MCF 10A (cell line): ENCODE measurements at regions of chr3 and their contacts with region 1.

Region 1: GRCh38 chr3:132682201-132682600 is 22.1 kb downstream of the UBA5 start:
- DNase-seq: no peak
- H3K4me3 Mint-ChIP-seq: no peak overlapping the region
- H3K27ac Mint-ChIP-seq: no peak overlapping the region
- H3K4me1 Mint-ChIP-seq: no peaks in the 10 kb centered on the region
- H3K27me3 Mint-ChIP-seq: no peaks in the 10 kb centered on the region
- CTCF ChIP-seq: no peak

Region 2: GRCh38 chr3:132650153-132650552 is 32.0 kb before region 1 on chr3:
- CTCF ChIA-PET with region 1: no interaction called
- POLR2A ChIA-PET with region 1: no interaction called
- intact Hi-C with region 1: no loop called
- DNase-seq: no peak
- H3K4me3 Mint-ChIP-seq: no peak overlapping the region
- H3K27ac Mint-ChIP-seq: no peak overlapping the region
- H3K4me1 Mint-ChIP-seq: peaks cover under 1% of the 10 kb centered on the region
- H3K27me3 Mint-ChIP-seq: no peaks in the 10 kb centered on the region
- CTCF ChIP-seq: no peak

Region 3: DNA sequence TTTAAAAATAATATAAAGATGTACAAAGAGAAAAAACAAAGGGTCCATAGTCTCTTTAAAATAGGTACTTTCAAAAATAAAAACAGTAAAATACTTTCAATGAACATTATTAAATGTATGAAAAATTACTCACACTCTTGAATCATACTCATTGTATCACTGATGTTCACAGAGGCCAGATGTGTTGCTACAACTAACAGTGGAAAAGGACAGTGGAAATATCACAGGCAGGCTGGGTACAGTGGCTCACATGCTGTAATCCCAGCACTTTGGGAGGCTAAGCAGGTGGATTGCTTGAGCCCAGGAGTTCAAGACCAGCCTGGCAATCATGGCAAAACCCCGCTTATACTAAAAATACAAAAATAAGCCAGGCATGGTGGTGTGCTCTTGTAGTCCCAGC is 13.2 kb after region 1 on chr3:
- CTCF ChIA-PET with region 1: interaction called, 4 read pairs
- POLR2A ChIA-PET with region 1: interaction called, 6 read pairs
- intact Hi-C with region 1: loop called (anchors 2 kb)
- DNase-seq: no peak
- H3K4me3 Mint-ChIP-seq: no peak overlapping the region
- H3K27ac Mint-ChIP-seq: no peak overlapping the region
- H3K4me1 Mint-ChIP-seq: no peaks in the 10 kb centered on the region
- H3K27me3 Mint-ChIP-seq: no peaks in the 10 kb centered on the region
- CTCF ChIP-seq: no peak